HAP-1 (cell line): ENCODE measurements at regions of chr10 and their contacts with region 1.

Region 1: GRCh38 chr10:88835096-88835909 is 16.3 kb downstream of the ANKRD22 start:
- DNase-seq: peak; percentile 81 to 89
- H3K4me3 ChIP-seq: no peak overlapping the region
- H3K4me1 ChIP-seq: no peaks in the 10 kb centered on the region
- H3K27me3 ChIP-seq: peaks cover 7% of the 10 kb centered on the region; the same call in 1 of the 2 replicates

Region 2: DNA sequence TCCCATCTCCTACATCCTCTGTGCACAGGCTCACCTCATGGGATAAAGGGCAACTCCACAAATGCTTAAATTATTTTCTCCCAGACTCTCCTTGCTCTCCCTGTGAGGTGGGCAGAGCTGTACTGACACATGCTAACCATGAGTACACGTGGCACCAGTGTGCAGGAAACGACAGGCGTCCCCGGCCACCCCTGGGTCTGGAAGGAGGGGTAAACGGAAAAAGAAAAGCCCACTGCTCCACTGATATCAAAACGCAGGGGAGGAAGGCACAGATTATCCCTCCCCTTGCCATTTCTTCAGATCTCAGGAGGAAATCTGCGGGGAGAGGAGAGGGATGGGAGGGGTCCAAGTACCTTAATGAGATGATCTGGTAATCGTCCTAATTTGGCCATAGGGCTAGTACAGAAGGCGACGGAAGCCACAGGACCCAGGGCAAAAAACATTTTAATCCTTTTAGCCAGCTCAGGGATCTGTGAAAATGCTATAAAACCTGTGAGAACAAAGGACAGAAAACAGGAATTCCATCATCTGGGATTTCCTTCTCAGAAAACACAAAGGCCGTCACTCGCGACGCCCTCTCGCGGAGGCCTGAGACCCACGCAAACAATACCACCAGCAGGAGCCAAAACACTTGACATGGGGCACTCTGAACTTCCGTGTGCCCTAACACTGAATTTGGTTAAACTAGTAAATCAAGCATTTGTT is 389.6 kb after region 1 on chr10:
- in situ Hi-C with region 1: loop called (anchors 10 kb)
- DNase-seq: peak; percentile 28 to 37
- H3K4me3 ChIP-seq: no peak overlapping the region
- H3K4me1 ChIP-seq: peaks cover 10% of the 10 kb centered on the region
- H3K27me3 ChIP-seq: no peaks in the 10 kb centered on the region